Sciatic nerve (tissue), 2 donors: ENCODE measurements at regions of chr12 and their contacts with region 1.

Region 1: GRCh38 chr12:120580787-120581723 is at the start of gene POP5:
- DNase-seq: peak; percentile 97
- ATAC-seq: peak; percentile 98
- total RNA-seq, gene POP5: 19.9 TPM

Region 2: DNA sequence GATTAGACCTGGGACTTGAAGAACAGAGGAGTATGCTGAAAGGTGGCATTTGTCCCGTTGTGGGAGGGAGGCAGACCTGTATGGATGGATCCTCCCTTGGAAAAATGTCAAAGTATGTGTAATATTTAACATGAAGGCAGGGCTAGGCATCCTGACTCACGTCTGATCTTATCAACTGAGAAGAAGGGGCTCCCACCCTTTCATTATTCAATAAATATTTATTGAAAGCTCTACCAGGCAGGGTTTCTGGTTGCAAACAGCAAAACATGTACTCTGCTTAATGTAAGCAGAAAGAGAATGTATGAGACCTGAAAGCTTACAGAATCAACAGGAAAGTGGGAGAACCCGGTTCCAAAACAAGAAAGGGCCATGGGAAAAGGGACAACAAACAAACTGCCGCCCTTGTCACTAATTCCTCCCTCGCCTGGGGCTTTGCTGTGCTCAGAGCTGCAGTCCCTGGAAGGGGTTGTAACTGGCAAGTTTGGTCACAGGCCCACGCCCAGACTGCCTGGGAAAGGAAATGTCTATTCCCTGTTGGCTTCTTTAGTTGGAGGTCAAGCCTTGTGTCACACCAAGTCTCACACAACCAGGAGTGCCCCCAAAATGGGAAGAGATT is 501.5 kb before region 1 on chr12:
- intact Hi-C with region 1: no loop called
- DNase-seq: peak; percentile 48
- ATAC-seq: no peak

Region 3: DNA sequence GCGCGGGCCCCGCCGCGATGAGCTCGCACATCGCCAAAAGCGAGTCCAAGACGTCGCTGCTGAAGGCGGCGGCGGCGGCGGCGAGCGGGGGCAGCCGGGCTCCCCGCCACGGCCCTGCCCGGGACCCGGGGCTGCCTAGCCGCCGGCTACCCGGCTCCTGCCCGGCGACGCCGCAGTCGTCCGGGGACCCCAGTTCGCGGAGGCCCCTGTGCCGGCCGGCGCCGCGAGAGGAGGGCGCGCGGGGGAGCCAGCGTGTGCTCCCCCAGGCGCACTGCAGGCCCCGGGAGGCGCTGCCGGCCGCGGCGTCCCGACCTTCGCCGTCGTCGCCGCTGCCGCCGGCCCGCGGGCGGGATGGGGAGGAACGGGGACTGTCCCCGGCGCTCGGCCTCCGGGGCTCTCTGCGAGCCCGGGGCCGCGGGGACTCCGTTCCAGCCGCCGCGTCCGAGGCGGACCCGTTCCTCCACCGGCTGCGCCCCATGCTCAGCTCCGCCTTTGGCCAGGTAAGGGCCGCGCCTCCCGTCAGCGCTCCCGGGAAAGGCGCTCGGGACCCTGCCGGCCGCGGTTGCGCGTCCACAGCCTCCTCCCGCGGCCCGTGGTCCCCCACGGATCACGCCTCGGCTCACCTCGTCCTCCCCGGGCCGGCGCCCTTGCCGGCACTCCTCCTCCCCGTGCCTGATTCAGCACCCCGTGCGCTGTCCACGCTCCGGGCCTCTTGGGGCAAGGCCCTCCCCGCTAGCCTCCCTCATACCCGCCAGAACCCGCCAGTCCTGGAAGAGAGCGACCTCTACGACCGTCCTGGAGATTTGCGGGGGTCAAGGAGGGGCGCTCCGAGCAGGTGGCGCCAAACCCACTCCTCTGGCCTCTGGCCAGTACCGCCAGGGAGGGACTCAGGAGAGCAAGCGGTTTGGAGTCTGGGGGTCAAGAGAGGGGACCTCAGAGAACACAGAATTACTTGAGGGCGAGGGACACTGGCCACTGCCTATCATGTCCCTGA is 60.1 kb after region 1 on chr12:
- intact Hi-C with region 1: loop called (anchors 10 kb)
- DNase-seq: peak; percentile 68
- ATAC-seq: peak; percentile 65